HepG2 (cell line): ENCODE measurements at regions of chr4 and their contacts with region 1.

Region 1: GRCh38 chr4:140851032-140851636 is 94.9 kb upstream of the TBC1D9 start:
- DNase-seq: peak; percentile 53
- ATAC-seq: peak; percentile 80
- H3K4me3 ChIP-seq: no peak overlapping the region
- H3K27ac ChIP-seq: no peak overlapping the region
- H3K4me1 ChIP-seq: 0 out of 2 replicates have a peak, but pooled peaks cover 5% of the 10 kb centered on the region
- H3K27me3 ChIP-seq: no peaks in the 10 kb centered on the region
- CTCF ChIP-seq: peak; percentile 85
- EP300 ChIP-seq: no peak
- POLR2A ChIP-seq: no peak
- RAD21 ChIP-seq: peak; percentile 82

Region 2: DNA sequence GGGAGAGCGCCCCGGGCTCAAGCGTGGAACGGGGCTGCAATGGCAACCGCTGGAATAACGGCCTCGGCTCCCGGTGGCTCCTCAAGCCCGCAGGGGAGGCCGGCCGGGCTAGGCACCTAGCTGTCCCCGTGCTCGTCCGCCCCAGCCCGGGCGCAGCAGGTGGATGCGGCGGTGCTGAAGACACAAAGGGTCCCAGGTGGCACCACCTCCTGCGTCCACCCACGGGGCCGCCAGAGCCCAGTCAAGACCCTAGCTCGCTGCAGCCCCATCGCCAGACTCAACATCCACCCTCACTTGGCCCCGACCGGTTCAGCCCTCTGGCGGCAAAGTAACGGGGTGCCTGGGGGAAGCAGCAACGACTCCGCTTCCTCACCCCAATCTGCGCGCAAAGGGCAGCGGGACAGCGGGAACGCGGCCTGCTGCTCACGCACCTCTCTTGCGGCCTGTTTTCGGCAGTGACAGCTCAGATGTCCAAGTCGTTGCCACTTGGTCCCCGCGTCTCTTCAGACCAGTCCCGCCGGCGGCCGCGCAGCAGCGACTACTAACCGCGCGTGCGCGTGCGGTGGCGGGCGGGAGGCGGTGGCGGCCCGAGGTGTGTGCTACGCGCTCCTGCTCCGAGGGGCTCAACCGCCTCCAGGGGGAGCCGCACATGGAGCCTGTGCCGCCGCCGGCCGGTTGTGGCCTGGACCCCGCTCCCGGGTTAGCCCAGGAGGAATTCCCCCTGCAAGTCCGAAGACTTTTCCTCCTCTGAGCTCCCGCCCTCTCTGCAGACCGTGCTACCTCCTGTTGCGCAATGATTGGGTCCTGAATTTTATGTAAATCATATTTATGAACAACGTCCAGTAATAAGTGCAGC is 423.8 kb before region 1 on chr4 and contains the start of gene CLGN:
- CTCF ChIA-PET with region 1: no interaction called
- POLR2A ChIA-PET with region 1: no interaction called
- in situ Hi-C with region 1: no loop called
- intact Hi-C with region 1: loop called (anchors 1 kb)
- DNase-seq: peak; percentile 77
- ATAC-seq: peak; percentile 94
- H3K4me3 ChIP-seq: peak within 1 kb of the TSS; percentile 82 to 93 (median 92)
- H3K27ac ChIP-seq: peak within 1 kb of the TSS; percentile 75
- H3K4me1 ChIP-seq: peaks cover 24% of the 10 kb centered on the region
- H3K27me3 ChIP-seq: no peaks in the 10 kb centered on the region; a peak in 1 of 5 replicates
- CTCF ChIP-seq: peak; percentile 86
- EP300 ChIP-seq: no peak; a peak in 1 of 4 replicates
- POLR2A ChIP-seq: peak; percentile 66 to 80
- RAD21 ChIP-seq: peak; percentile 72
- total RNA-seq, gene CLGN: 10.0 and 17.0 TPM in 2 replicates

Region 3: GRCh38 chr4:140595065-140595464 is 256.1 kb before region 1 on chr4:
- CTCF ChIA-PET with region 1: interaction called, 26 read pairs
- POLR2A ChIA-PET with region 1: no interaction called
- in situ Hi-C with region 1: loop called (anchors 10 kb)
- intact Hi-C with region 1: loop called (anchors 1 kb)
- DNase-seq: peak; percentile 50
- ATAC-seq: peak; percentile 100
- H3K4me3 ChIP-seq: no peak overlapping the region
- H3K27ac ChIP-seq: no peak overlapping the region
- H3K4me1 ChIP-seq: no peaks in the 10 kb centered on the region
- H3K27me3 ChIP-seq: peaks cover 0 to 3% of the 10 kb centered on the region in 2 experiments; a peak in 1 of 5 replicates
- CTCF ChIP-seq: peak; percentile 79
- EP300 ChIP-seq: no peak
- POLR2A ChIP-seq: no peak
- RAD21 ChIP-seq: peak; percentile 62

Region 4: GRCh38 chr4:140637836-140638235 is 213.3 kb before region 1 on chr4:
- CTCF ChIA-PET with region 1: no interaction called
- POLR2A ChIA-PET with region 1: no interaction called
- in situ Hi-C with region 1: no loop called
- intact Hi-C with region 1: loop called (anchors 2 kb)
- DNase-seq: peak; percentile 59
- ATAC-seq: peak; percentile 19; the same call in 1 of the 3 replicates
- H3K4me3 ChIP-seq: no peak overlapping the region
- H3K27ac ChIP-seq: no peak overlapping the region
- H3K4me1 ChIP-seq: peaks cover 82% of the 10 kb centered on the region
- H3K27me3 ChIP-seq: no peaks in the 10 kb centered on the region
- CTCF ChIP-seq: peak; percentile 79
- EP300 ChIP-seq: no peak
- POLR2A ChIP-seq: no peak
- RAD21 ChIP-seq: peak; percentile 45; the same call in 1 of the 2 replicates

Region 5: DNA sequence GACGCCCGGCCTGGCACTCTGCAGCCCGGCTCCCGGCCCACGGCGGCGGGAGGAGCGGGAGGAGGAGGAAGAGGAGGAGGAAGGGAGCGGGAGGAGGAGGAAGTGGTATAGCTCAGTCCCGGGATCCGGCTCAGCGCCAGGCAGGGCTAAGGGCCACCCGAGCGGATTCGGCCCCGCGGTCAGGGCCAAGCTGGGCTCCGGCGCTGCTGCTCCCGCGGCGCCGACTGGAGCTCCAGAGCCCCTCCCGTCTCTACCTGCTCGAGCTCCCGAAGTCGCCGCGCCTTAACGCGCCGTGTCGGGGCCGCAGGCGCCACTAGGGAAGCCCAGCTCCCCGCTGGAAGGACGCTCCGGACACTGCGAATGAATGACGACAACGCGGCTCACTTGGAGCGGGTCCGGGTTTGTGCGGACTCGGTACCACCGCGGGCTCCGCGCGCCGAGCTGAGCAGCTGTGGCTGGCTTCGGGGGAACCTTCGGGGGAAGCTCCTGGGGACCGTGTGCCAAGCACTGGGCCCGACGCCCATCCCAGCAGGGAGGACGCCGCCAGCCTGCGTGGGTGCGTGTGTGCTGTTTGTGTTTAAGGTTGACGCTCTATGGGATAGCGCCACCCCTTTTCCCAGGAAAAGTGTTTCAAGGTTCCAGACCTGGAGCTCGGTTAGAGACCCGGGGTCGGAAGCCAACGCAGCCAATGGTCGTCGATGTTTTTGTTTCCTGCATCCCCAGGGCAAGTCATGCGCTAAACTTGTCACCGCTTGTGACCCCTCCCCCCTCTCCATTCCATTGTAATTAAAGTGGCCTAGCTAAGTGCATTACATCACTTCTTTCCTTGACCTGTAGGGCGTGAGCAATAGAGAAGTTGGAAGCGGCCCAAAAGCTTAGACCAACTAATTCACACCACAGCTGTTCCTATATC is 94.6 kb before region 1 on chr4 and contains the start of gene TBC1D9:
- CTCF ChIA-PET with region 1: no interaction called
- POLR2A ChIA-PET with region 1: no interaction called
- in situ Hi-C with region 1: no loop called
- intact Hi-C with region 1: loop called (anchors 5 kb)
- DNase-seq: peak; percentile 68
- ATAC-seq: peak; percentile 80
- H3K4me3 ChIP-seq: peak within 1 kb of the TSS; percentile 82 to 91 (median 88)
- H3K27ac ChIP-seq: peak within 1 kb of the TSS; percentile 69
- H3K4me1 ChIP-seq: peaks cover 38% of the 10 kb centered on the region
- H3K27me3 ChIP-seq: no peaks in the 10 kb centered on the region
- CTCF ChIP-seq: peak; percentile 68
- EP300 ChIP-seq: no peak
- POLR2A ChIP-seq: peak; percentile 58 to 77
- RAD21 ChIP-seq: no peak; the same call in 1 of the 2 replicates
- total RNA-seq, gene TBC1D9: 12.2 TPM in 2 replicates